Transverse colon (tissue), 4 donors: ENCODE measurements at regions of chr19 and their contacts with region 1.

Region 1: GRCh38 chr19:1616396-1616795 is 11.1 kb upstream of the UQCR11 start:
- DNase-seq: no peak
- H3K4me3 ChIP-seq: no peak overlapping the region
- H3K27ac ChIP-seq: peak overlapping the region in 3 of 4 donors; percentile 16 to 58 (median 49)
- H3K4me1 ChIP-seq: no peaks in the 10 kb centered on the region
- H3K27me3 ChIP-seq: no peaks in the 10 kb centered on the region
- CTCF ChIP-seq: no peak
- EP300 ChIP-seq: no peak
- POLR2A ChIP-seq: no peak

Region 2: DNA sequence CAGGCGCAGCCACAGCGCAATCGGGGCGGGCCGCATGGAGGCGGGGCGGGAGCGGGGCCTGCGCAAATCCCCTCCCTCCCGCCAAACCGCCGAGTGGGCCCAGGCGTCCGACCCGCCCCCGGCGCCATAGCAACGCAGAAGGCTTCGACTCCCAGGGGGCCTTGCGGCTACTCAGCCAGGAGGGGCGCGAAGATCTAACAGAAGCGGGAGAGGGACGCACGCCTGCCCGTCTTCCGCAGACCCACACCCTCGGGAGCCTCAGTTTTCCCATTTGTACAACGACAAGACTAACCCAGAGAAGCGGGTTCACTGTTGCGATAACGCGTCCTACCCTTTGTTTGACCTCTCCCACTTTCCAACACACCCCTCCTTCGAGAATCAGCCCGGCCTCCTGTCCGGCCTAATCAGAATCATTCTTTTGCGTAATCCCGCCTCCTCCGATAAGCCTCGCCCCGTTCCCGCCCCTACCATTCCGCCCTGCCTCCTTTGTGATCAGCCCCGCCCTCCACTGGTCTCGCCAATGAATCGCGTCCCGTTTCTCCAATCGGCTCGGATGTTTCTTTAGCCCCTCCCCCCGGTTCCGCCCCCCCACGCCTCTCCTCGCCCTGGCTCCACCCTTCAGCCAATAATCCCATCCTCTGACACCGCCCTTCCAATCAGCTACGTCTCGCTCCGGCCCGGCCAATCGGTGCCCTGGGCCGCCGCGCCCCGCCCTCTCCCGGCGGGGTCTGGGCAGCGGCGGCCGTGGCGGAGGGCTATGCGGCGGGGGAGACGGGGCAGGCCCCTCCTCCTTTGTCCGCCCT is 125.9 kb before region 1 on chr19 and contains the start of gene PCSK4:
- in situ Hi-C with region 1: no loop called
- intact Hi-C with region 1: no loop called
- DNase-seq: peak; percentile 100
- H3K4me3 ChIP-seq: peak within 1 kb of the TSS; percentile 29 to 59 (median 48)
- H3K27ac ChIP-seq: peak within 1 kb of the TSS; percentile 74 to 89 (median 85)
- H3K4me1 ChIP-seq: peaks cover 10 to 17% (median 15%) of the 10 kb centered on the region in 4 donors
- H3K27me3 ChIP-seq: peaks cover 18% of the 10 kb centered on the region
- CTCF ChIP-seq: no peak
- EP300 ChIP-seq: no peak
- POLR2A ChIP-seq: no peak
- total RNA-seq, gene PCSK4: 2.6 to 11.9 (median 7.5) TPM

Region 3: DNA sequence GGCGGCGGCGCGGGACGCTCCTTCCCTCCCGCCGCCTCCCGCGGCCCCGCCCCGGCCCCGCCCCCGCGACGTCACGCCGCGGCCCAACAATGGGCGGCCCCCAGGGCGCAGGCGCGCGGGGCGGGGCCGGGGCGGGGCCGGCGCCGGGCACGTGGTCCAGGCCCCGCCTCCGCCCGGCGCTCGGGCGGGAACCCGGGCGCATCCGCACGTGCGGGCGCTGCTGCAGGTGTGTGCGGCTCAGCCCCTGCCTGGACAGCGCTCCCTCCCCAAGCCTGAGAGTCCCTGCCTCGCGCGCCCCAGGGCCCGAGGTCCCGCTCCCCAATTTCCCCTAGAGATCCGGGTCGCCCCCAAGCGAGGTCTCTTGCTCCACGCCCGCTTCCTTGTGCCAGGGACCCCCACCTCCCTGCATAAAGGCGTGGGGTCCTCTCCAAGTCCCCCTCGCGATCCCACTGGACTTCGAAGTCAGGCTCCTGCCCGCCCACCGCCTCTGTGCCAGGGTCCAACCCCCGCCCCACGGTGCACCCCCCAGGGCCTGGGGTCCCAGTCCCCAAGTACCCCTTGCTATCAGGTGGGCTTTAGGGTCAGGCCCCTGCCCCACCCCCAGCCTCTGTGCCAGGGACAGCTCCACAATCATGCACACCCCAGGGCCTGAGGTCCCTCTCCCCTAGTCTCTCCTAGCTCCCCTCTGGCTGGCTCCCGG is 47.9 kb before region 1 on chr19 and contains the start of gene MEX3D:
- in situ Hi-C with region 1: no loop called
- intact Hi-C with region 1: loop called (anchors 1 kb)
- DNase-seq: peak; percentile 87
- H3K4me3 ChIP-seq: peak within 1 kb of the TSS; percentile 62 to 74 (median 67)
- H3K27ac ChIP-seq: peak within 1 kb of the TSS; percentile 82 to 90 (median 88)
- H3K4me1 ChIP-seq: peaks cover 3 to 20% (median 17%) of the 10 kb centered on the region in 4 donors
- H3K27me3 ChIP-seq: peaks cover 7% of the 10 kb centered on the region
- CTCF ChIP-seq: no peak
- EP300 ChIP-seq: no peak
- POLR2A ChIP-seq: no peak
- total RNA-seq, gene MEX3D: 20.8 to 100 (median 27.8) TPM